ENCODE measurements at regions of chr3 and their contacts with region 1.

Region 1: DNA sequence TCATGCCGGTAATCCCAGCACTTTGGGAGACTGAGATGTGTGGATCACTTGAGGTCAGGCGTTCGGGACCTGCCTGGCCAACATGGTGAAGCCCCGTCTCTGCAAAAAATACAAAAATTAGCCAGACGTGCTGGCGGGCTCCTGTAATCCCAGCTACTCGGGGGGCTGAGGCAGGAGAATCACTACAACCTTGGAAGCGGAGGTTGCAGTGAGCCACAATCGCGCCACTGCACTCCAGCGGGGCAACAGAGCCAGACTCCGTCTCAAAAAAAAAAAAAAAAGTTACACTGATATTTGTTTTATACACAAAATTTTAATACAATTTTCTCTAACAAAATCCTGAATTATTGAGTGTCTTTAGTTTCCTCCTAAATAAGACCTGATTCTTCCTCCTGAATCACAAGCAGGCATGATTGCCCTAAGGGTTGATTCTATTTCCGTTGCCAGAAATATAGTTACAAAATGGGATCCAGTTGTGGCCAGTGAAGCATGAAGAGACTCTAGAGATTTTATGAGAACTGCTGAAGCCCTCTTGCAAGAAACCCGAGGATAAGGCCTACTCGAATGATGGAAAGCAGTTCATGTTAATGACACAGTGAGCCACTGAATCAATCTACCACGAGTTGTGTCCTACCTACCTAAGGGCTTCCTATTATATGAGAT is 9.6 kb upstream of the SMARCC1 start:
- DNase-seq: no peak
- H3K4me3 ChIP-seq: no peak overlapping the region
- CTCF ChIP-seq: no peak
- POLR2A ChIP-seq: no peak

Region 2: DNA sequence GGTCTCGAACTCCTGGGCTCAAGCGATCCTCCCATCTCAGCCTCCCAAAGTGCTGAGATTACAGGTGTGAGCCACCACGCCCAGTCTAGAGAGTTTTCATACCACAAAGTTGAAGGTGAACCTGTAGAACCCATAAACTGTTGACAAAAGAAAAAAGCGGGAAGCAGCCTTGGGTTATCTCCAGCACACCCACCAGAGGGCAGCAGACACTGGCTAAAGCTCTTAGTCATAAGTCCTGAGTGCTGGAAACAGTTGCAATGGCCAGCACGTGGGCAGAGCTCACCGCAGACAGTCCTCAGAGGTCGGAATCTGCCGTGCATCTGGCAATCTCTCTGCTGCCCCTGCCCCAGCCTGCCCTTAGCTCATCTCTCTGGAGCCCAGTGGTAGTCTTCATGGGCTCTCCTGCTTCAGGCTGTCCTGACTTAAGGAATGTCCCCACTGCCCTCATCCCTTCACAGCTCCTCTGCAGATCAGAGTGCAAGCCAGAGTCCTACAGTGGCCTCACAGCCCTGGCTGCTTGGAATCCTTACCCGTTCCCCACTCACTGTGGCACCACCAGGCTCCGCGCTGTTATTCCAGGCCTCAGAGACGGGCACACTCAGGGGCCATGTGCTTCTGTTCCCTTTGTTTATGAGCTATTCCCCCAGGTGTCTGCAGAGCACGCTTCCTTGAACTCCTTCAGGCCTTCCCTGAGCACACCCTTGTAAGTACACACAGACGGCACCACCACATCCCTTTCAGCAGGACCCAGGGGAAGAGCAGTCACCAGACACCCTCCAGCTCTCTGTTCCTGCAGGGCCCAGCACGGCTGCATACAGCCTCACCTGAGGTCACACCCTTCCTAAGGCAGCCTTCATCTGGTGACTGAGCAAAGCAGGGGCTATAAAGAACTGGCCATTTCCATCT is 269.0 kb before region 1 on chr3:
- intact Hi-C with region 1: loop called (anchors 5 kb)
- DNase-seq: peak; percentile 80 to 95
- H3K4me3 ChIP-seq: no peak overlapping the region
- CTCF ChIP-seq: peak in 1 of 3 donors; percentile 87
- POLR2A ChIP-seq: no peak

Measured in lower leg skin (tissue), 4 donors.